HepG2 (cell line): ENCODE measurements at regions of chr17 and their contacts with region 1.

Region 1: DNA sequence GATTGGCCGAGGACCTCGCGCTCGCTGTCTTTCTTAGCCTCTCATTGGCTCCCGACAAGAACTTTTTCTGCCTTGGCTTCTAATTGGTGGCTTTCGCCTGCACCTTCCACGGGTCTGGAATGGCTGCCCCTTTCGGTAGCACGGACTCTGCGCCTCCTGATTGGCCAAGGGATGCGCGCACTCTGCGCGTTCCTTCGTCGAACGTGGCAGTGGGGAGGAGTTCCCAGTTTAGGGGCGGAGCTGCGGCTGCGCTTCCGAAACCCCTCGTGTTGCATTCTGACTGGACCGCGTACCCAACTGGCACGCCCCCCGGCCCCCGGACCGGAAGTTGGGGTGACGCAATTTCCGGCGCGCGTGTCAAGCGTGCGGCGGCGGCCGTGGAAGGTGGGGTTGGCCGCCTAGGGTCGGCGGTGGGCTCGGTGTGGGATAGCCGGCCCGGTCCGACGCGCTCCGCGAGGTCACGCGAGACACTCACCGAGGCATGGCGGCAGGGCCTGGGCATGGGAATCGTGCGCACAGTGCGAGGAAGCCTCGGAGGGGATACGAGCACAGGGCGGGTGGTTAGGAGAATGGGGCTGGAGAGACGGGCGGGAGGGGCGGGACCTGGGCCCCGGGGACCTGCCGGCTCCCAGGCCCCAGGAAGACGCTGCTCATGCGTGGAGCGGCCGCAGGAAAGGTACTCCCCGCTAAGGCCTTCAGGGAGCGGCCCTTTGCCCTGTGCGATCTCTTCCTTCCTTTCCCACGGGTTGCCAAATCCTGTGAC is 602 bp upstream of the P4HB start:
- DNase-seq: peak; percentile 100
- ATAC-seq: peak; percentile 89
- H3K4me3 ChIP-seq: peak overlapping the region; percentile 83 to 91 (median 86)
- H3K27ac ChIP-seq: peak overlapping the region; percentile 94
- H3K4me1 ChIP-seq: peaks cover 77% of the 10 kb centered on the region
- H3K27me3 ChIP-seq: no peaks in the 10 kb centered on the region; a peak in 1 of 5 replicates
- CTCF ChIP-seq: peak; percentile 9; the same call in 1 of the 2 replicates
- EP300 ChIP-seq: peak; percentile 24 to 50; a peak in 3 of 4 replicates
- POLR2A ChIP-seq: peak in 1 of 2 experiments; percentile 94; a peak in 2 of 4 replicates
- RAD21 ChIP-seq: no peak; the same call in 1 of the 2 replicates

Region 2: GRCh38 chr17:81702971-81703746 is 157.8 kb before region 1 on chr17 and contains the start of gene MRPL12:
- CTCF ChIA-PET with region 1: no interaction called
- POLR2A ChIA-PET with region 1: interaction called, 12 read pairs
- in situ Hi-C with region 1: no loop called
- intact Hi-C with region 1: no loop called
- DNase-seq: peak; percentile 91
- ATAC-seq: peak; percentile 82
- H3K4me3 ChIP-seq: peak within 1 kb of the TSS; percentile 92 to 93 (median 92)
- H3K27ac ChIP-seq: peak within 1 kb of the TSS; percentile 93
- H3K4me1 ChIP-seq: peaks cover 33% of the 10 kb centered on the region
- H3K27me3 ChIP-seq: no peaks in the 10 kb centered on the region; a peak in 1 of 5 replicates
- CTCF ChIP-seq: peak; percentile 69
- EP300 ChIP-seq: 0 out of 4 replicates have a peak, but pooled peaks of 1 of the 2 experiments have one; percentile 37
- POLR2A ChIP-seq: peak in 1 of 2 experiments; percentile 96; a peak in 2 of 4 replicates
- RAD21 ChIP-seq: peak; percentile 47
- total RNA-seq, gene MRPL12: 39.1 and 72.5 TPM in 2 replicates

Region 3: DNA sequence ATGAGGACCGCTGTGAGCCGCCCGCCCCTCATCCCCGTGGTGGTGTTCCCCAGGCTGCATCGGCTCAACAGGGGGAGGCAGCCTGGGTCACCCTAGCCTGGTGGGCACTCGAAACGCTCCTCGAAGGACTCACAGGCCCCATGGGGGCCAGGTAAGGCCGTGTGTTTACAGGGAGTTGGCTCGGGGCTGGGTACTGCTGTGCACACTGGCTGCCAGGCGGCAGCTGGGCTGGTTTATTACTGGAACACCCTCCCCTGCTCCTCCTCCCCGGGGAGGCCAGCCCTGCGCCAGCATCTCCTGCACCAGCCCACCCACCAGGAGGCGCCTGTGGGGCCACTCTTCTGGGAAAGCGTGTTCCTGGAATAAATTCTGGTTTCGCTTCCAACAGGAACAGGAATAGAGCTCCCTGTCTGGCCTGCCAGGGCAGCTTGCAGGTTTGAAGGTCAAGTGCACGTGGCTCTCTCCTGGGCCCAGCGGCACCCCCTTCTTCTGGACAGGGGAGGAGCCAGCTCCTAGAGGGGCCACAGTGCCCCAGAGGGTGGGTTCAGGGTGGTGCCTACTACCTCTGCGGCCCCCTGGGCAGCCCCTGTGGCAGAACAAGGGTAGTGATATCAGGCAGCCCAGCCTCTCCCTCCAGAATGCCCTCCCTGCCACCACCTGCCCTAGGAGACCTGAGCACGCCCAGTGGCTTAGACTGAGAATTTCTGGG is 39.2 kb before region 1 on chr17:
- CTCF ChIA-PET with region 1: interaction called, 3 read pairs
- POLR2A ChIA-PET with region 1: interaction called, 9 read pairs
- in situ Hi-C with region 1: no loop called
- intact Hi-C with region 1: loop called (anchors 5 kb)
- DNase-seq: peak; percentile 84
- ATAC-seq: peak; percentile 84
- H3K4me3 ChIP-seq: peak overlapping the region in 1 of 3 experiments; percentile 40; a peak in 1 of 6 replicates
- H3K27ac ChIP-seq: peak overlapping the region; percentile 53
- H3K4me1 ChIP-seq: peaks cover 37% of the 10 kb centered on the region
- H3K27me3 ChIP-seq: no peaks in the 10 kb centered on the region; a peak in 2 of 5 replicates
- CTCF ChIP-seq: peak; percentile 90
- EP300 ChIP-seq: peak in 1 of 2 experiments; percentile 29; a peak in 1 of 4 replicates
- POLR2A ChIP-seq: no peak
- RAD21 ChIP-seq: peak; percentile 91

Region 4: DNA sequence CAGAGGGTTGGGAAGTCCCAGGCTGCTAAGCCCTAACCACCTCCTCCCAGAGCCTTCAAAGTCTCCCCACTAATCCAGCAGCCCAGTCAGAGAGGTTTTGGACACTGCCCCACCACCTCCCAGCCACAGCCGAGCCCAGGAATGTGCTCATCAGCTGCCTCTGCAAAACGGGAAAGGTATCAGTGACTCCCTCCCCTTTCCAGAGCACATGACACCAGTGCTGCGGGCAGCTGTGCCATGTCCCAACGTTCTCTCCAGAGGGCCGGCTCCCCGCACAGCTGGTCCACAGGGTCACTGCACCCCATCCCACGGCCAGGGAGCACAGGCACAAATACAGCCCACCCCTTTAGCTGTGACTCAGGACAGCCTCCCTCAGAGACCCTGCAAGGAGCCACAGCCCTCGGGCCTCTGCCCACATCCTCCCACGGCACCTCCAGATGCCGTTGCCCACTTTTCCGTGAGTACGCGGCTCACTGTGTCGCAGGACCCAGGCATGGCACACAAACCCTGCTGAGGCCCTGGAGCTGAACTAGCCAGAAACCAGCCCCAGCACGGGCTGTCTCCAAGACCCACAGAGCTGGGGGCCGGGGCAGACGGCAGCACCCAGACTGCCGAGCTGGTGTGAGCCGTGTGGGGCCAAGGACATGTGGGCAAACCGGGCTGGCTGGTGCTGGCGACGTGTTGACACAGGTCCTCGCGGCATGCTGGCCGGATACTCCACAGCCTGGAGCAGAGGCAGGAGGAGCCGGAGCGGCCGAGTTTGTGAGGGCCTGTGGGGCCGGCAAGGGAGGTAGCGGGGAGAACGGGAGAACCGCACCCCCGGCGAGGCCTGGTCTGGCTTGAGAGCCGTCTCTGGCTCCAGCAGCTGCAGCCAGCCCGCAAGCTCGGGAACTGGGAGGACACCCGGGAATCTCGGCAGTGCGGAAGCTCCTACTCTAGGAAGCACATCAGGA is 19.8 kb before region 1 on chr17:
- CTCF ChIA-PET with region 1: no interaction called
- POLR2A ChIA-PET with region 1: interaction called, 40 read pairs
- in situ Hi-C with region 1: no loop called
- intact Hi-C with region 1: no loop called
- DNase-seq: no peak
- ATAC-seq: peak; percentile 53
- H3K4me3 ChIP-seq: no peak overlapping the region; a peak in 1 of 6 replicates
- H3K27ac ChIP-seq: no peak overlapping the region
- H3K4me1 ChIP-seq: peaks cover 40% of the 10 kb centered on the region
- H3K27me3 ChIP-seq: no peaks in the 10 kb centered on the region
- CTCF ChIP-seq: no peak
- EP300 ChIP-seq: no peak
- POLR2A ChIP-seq: no peak
- RAD21 ChIP-seq: 0 out of 2 replicates have a peak, but pooled peaks have one; percentile 10

Region 5: DNA sequence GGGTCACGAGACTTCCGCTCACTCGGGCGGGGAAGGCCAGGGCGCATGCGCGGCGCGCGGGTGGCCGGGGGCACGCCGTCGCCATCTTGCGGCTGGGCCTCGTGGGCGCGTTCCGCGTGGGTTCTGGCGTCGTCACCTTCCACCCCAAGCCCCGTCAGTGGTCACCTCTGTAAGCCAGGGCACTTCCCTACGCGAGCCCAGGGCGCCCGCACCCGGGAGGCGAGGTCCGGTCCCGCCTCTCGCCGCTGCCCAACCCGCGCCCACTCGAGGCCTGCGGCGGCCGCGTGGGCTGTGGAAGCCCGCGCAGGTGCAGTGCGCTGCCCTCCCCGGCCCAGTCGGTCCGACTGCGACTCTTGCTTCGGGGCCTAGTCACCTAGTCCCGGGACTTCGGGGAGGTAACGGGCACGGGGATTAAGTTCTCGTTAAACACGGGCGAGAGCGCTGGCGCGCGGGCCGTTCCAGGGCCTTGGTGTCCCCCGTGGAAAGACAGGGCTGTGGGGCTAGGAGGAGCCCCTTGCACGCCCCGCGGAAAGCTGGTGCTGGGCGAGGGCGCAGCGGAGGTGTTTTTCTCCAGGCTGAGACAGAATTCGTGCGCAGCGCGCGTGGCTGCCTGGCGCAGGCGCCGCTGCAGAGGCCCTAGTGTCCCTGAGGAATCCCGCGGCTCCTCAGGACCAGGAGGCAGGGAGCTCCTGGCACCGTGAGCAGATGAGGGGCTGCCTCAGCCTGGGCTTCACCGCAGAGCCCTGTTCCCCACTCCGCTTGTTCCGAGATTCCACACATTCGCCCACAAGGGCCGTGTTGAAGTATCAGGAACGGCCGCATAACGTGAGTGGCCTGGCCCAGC is 10.7 kb after region 1 on chr17:
- CTCF ChIA-PET with region 1: no interaction called
- POLR2A ChIA-PET with region 1: interaction called, 26 read pairs
- in situ Hi-C with region 1: no loop called
- intact Hi-C with region 1: no loop called
- DNase-seq: peak; percentile 86
- ATAC-seq: no peak; the same call in 2 of the 3 replicates
- H3K4me3 ChIP-seq: peak overlapping the region; percentile 65 to 92 (median 90)
- H3K27ac ChIP-seq: peak overlapping the region; percentile 98
- H3K4me1 ChIP-seq: peaks cover 52% of the 10 kb centered on the region
- H3K27me3 ChIP-seq: no peaks in the 10 kb centered on the region
- CTCF ChIP-seq: peak; percentile 74
- EP300 ChIP-seq: no peak; a peak in 1 of 4 replicates
- POLR2A ChIP-seq: peak in 1 of 2 experiments; percentile 58; a peak in 2 of 4 replicates
- RAD21 ChIP-seq: peak; percentile 81

Region 6: DNA sequence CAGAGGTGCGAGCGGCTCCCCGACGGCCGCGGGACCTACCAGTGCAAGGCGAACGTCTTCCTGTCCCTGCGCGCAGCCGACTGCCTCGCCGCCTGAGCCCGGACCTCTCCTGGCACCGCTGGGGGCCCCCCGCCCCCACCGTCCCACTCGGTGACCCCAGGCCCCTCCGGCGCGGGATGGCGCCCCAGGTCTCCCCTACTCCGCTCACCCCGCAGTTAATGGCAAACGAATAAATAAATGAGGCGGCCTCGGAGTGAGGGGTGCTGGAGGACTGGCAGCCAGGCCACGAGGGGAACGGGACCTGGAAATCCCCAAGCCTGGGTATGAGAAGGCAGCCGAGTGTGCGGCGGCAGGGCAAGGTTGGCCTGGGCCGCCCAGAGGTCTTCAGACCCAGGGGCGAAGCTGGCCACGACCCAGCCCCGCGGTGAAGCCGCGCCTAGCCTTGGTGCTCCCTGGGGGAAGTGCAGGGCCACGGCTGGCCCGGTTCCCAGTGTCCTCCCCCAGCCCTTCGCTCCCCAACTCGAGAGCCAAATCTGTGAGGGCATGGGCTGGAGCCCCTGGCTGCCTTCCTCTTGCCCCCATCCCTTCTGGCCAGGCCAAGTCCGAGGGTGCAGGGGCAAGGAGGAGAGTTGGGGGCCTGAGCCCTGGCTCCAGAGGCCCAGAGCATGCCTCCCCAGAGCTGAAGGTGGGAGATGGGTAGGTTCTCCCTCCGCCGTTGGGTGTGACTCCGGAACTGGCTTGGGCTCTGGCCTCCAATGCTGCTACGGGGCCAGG is 41.9 kb after region 1 on chr17:
- CTCF ChIA-PET with region 1: no interaction called
- POLR2A ChIA-PET with region 1: no interaction called
- in situ Hi-C with region 1: no loop called
- intact Hi-C with region 1: no loop called
- DNase-seq: no peak
- ATAC-seq: peak; percentile 7
- H3K4me3 ChIP-seq: peak overlapping the region in 2 of 3 experiments; percentile 19 to 65; a peak in 3 of 6 replicates
- H3K27ac ChIP-seq: peak overlapping the region; percentile 28
- H3K4me1 ChIP-seq: peaks cover 22% of the 10 kb centered on the region
- H3K27me3 ChIP-seq: no peaks in the 10 kb centered on the region
- CTCF ChIP-seq: no peak
- EP300 ChIP-seq: no peak
- POLR2A ChIP-seq: no peak; a peak in 1 of 4 replicates
- RAD21 ChIP-seq: no peak; the same call in 1 of the 2 replicates

Region 7: GRCh38 chr17:81967533-81968395 is 106.8 kb after region 1 on chr17:
- CTCF ChIA-PET with region 1: no interaction called
- POLR2A ChIA-PET with region 1: interaction called, 10 read pairs
- in situ Hi-C with region 1: no loop called
- intact Hi-C with region 1: no loop called
- DNase-seq: peak; percentile 98
- ATAC-seq: peak; percentile 79
- H3K4me3 ChIP-seq: peak overlapping the region; percentile 44 to 74 (median 48)
- H3K27ac ChIP-seq: peak overlapping the region; percentile 75
- H3K4me1 ChIP-seq: peaks cover 70% of the 10 kb centered on the region
- H3K27me3 ChIP-seq: no peaks in the 10 kb centered on the region
- CTCF ChIP-seq: peak; percentile 49
- EP300 ChIP-seq: peak in 1 of 2 experiments; percentile 90; a peak in 3 of 4 replicates
- POLR2A ChIP-seq: peak in 1 of 2 experiments; percentile 41; a peak in 1 of 4 replicates
- RAD21 ChIP-seq: 0 out of 2 replicates have a peak, but pooled peaks have one; percentile 14